CD8-positive, alpha-beta T cell (primary cell): ENCODE measurements at regions of chr15 and their contacts with region 1.

Region 1: DNA sequence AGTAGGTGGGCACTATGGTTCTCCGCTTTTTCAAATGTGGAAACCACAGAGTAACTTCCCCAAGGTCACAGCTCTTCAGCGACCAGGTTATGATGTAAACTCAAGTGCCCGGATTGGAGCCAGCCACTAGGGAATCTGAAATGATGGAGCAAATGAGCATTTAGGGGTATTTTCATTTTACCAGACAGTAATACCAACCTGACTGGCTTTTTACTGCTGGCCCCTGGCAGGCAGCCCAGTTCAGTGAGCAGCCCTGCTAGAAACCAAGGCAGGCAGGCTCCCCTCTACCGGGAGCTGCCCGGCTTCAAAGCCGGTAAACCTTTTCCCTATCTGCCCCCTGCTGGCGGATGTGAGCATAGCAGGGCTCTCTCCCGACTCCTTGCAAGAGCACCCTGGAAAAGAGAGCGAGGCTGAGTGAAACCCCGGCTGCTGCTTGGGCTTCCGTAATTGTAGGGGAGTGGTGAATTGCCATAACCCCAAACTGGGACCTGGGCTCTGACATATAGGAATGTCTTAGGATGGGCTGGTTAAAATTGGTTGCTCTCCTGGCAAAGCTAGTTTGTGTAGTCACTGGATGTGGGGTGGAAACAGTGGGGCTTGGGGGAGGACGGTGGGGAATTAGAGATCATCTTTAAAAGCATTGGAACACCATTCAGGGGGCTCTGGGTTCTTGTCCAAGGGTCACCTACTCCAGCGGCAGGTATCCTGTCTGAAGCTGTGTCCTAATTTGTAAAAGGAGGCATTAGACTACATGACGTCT is 98.0 kb upstream of the TNFAIP8L3 start:
- DNase-seq: peak; percentile 29 to 75 (median 60)
- ATAC-seq: no peak
- H3K4me3 ChIP-seq: no peak overlapping the region
- H3K4me3 Mint-ChIP-seq: no peak overlapping the region
- H3K27ac ChIP-seq: no peak overlapping the region
- H3K27ac Mint-ChIP-seq: no peak overlapping the region
- H3K4me1 ChIP-seq: no peaks in the 10 kb centered on the region
- H3K4me1 Mint-ChIP-seq: no peaks in the 10 kb centered on the region
- H3K27me3 ChIP-seq: peaks cover 0 to 9% of the 10 kb centered on the region in 2 experiments
- H3K27me3 Mint-ChIP-seq: peaks cover 29% of the 10 kb centered on the region
- CTCF ChIP-seq: peak; percentile 77

Region 2: DNA sequence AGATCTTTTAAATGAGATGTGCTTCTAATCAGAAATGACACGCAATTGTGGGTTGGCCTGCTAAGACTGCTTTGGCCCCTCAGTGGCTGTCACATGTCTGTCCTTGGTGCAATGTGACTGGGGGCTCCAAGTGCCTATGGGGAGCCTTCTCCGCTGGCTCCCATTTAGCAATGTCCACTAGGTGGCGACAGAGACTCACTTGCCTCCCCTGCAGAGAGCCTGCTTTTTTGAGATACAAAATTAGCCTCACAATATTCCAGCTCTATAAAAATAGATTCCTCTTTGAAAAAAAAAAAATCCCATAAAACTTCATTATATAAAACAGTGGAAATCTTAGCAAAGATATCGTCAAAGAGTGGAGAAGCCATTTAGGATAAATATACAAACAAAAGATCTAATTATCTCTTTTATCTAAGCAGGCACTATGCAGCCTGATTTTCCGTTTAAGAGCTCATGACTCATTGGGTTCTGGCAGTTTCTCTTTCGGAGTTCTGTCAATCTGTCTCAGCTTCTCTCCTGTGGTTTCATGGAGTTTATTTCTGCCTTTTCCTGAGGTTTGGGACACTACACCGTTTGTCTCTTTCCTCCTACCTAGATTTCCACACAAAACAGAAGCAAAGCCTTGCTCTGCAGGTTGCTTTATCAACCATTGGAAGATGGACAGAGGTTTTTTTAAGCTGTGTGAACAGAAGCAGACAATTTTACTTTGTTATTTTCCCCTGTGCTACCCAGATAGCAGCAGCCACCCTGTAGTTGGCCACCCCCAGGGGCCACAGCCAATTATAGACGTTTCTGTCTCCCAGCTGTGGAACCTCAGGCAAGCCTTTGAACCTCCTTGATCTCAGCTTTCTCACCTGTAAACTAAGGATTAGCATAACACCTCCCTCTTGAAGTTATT is 29.6 kb before region 1 on chr15:
- CTCF ChIA-PET with region 1: interaction called, 32 read pairs
- POLR2A ChIA-PET with region 1: no interaction called
- intact Hi-C with region 1: loop called in 1 of 2 experiments (anchors 1 kb)
- DNase-seq: peak in 8 of 9 experiments; percentile 20 to 63 (median 52)
- ATAC-seq: no peak
- H3K4me3 ChIP-seq: no peak overlapping the region
- H3K4me3 Mint-ChIP-seq: no peak overlapping the region
- H3K27ac ChIP-seq: no peak overlapping the region
- H3K27ac Mint-ChIP-seq: no peak overlapping the region
- H3K4me1 ChIP-seq: no peaks in the 10 kb centered on the region
- H3K4me1 Mint-ChIP-seq: peaks cover 2% of the 10 kb centered on the region
- H3K27me3 ChIP-seq: no peaks in the 10 kb centered on the region
- H3K27me3 Mint-ChIP-seq: peaks cover 12% of the 10 kb centered on the region
- CTCF ChIP-seq: peak; percentile 86

Region 3: GRCh38 chr15:51203797-51204196 is 11.1 kb after region 1 on chr15:
- CTCF ChIA-PET with region 1: interaction called, 12 read pairs
- POLR2A ChIA-PET with region 1: no interaction called
- intact Hi-C with region 1: no loop called
- DNase-seq: no peak
- ATAC-seq: no peak
- H3K4me3 ChIP-seq: no peak overlapping the region
- H3K4me3 Mint-ChIP-seq: no peak overlapping the region
- H3K27ac ChIP-seq: no peak overlapping the region
- H3K27ac Mint-ChIP-seq: no peak overlapping the region
- H3K4me1 ChIP-seq: no peaks in the 10 kb centered on the region
- H3K4me1 Mint-ChIP-seq: no peaks in the 10 kb centered on the region
- H3K27me3 ChIP-seq: no peaks in the 10 kb centered on the region
- H3K27me3 Mint-ChIP-seq: peaks cover 9% of the 10 kb centered on the region
- CTCF ChIP-seq: no peak

Region 4: GRCh38 chr15:51260212-51260611 is 67.5 kb after region 1 on chr15:
- CTCF ChIA-PET with region 1: no interaction called
- POLR2A ChIA-PET with region 1: no interaction called
- intact Hi-C with region 1: no loop called
- DNase-seq: no peak
- ATAC-seq: no peak
- H3K4me3 ChIP-seq: no peak overlapping the region
- H3K4me3 Mint-ChIP-seq: no peak overlapping the region
- H3K27ac ChIP-seq: no peak overlapping the region
- H3K27ac Mint-ChIP-seq: no peak overlapping the region
- H3K4me1 ChIP-seq: no peaks in the 10 kb centered on the region
- H3K4me1 Mint-ChIP-seq: no peaks in the 10 kb centered on the region
- H3K27me3 ChIP-seq: no peaks in the 10 kb centered on the region
- H3K27me3 Mint-ChIP-seq: peaks cover 7% of the 10 kb centered on the region
- CTCF ChIP-seq: no peak